ENCODE measurements at regions of chr3 and their contacts with region 1.

Region 1: GRCh38 chr3:141426404-141427034 is 58.2 kb downstream of the ZBTB38 start:
- DNase-seq: peak; percentile 42 to 62 (median 58)
- H3K4me3 ChIP-seq: peak overlapping the region in 2 of 7 experiments; percentile 22 to 29
- H3K27ac ChIP-seq: peak overlapping the region in 1 of 2 experiments; percentile 50
- H3K4me1 ChIP-seq: peaks cover 2 to 20% (median 9%) of the 10 kb centered on the region in 4 experiments
- H3K27me3 ChIP-seq: no peaks in the 10 kb centered on the region

Region 2: GRCh38 chr3:141412087-141412935 is 14.2 kb before region 1 on chr3:
- CTCF ChIA-PET with region 1: interaction called, 25 read pairs
- POLR2A ChIA-PET with region 1: interaction called, 3 read pairs
- DNase-seq: peak; percentile 74 to 84 (median 83)
- H3K4me3 ChIP-seq: peak overlapping the region in 5 of 7 experiments; percentile 38 to 76 (median 45)
- H3K27ac ChIP-seq: peak overlapping the region; percentile 52 to 71
- H3K4me1 ChIP-seq: peaks cover 0 to 23% (median 6%) of the 10 kb centered on the region in 4 experiments
- H3K27me3 ChIP-seq: no peaks in the 10 kb centered on the region

Region 3: GRCh38 chr3:141553055-141553454 is 126.5 kb after region 1 on chr3:
- CTCF ChIA-PET with region 1: no interaction called
- POLR2A ChIA-PET with region 1: no interaction called
- DNase-seq: peak; percentile 56 to 92 (median 84)
- H3K4me3 ChIP-seq: peak overlapping the region in 2 of 7 experiments; percentile 20 to 41
- H3K27ac ChIP-seq: no peak overlapping the region
- H3K4me1 ChIP-seq: peaks cover 33 to 49% (median 41%) of the 10 kb centered on the region in 4 experiments
- H3K27me3 ChIP-seq: no peaks in the 10 kb centered on the region